Gastrocnemius medialis (tissue), 4 donors: ENCODE measurements at regions of chr11 and their contacts with region 1.

Region 1: GRCh38 chr11:61332797-61333549 is at the starts of genes DDB1 and TKFC:
- DNase-seq: peak; percentile 94
- ATAC-seq: peak; percentile 84 to 86
- H3K4me3 ChIP-seq: peak within 1 kb of the TSS; percentile 89 to 100 (median 98)
- H3K27ac ChIP-seq: peak within 1 kb of the TSS; percentile 93 to 99 (median 97)
- H3K4me1 ChIP-seq: peaks cover 32 to 39% of the 10 kb centered on the region in 2 donors
- H3K27me3 ChIP-seq: no peaks in the 10 kb centered on the region
- CTCF ChIP-seq: peak in 1 of 5 experiments; percentile 5
- POLR2A ChIP-seq: peak; percentile 87 to 91
- total RNA-seq, gene DDB1: 175 to 215 (median 189) TPM
- total RNA-seq, gene TKFC: 6.7 to 14.8 (median 11.8) TPM

Region 2: GRCh38 chr11:61361686-61362541 is 28.9 kb after region 1 on chr11 and contains the starts of genes CYB561A3 and TMEM138:
- in situ Hi-C with region 1: no loop called
- intact Hi-C with region 1: loop called (anchors 1 kb)
- DNase-seq: peak; percentile 87 to 91
- ATAC-seq: peak; percentile 86
- H3K4me3 ChIP-seq: peak within 1 kb of the TSS; percentile 88 to 99 (median 94)
- H3K27ac ChIP-seq: peak within 1 kb of the TSS; percentile 98 to 100 (median 100)
- H3K4me1 ChIP-seq: peaks cover 24 to 29% of the 10 kb centered on the region in 2 donors
- H3K27me3 ChIP-seq: no peaks in the 10 kb centered on the region
- CTCF ChIP-seq: no peak
- POLR2A ChIP-seq: peak; percentile 94 to 98
- total RNA-seq, gene CYB561A3: 23.7 to 56.6 (median 26.4) TPM
- total RNA-seq, gene TMEM138: 9.4 to 18.4 (median 13.9) TPM

Region 3: GRCh38 chr11:61384271-61385242 is 51.6 kb after region 1 on chr11:
- in situ Hi-C with region 1: loop called (anchors 5 kb)
- intact Hi-C with region 1: loop called (anchors 1 kb)
- DNase-seq: no peak
- ATAC-seq: peak in 1 of 2 donors; percentile 17
- H3K4me3 ChIP-seq: no peak overlapping the region
- H3K27ac ChIP-seq: no peak overlapping the region
- H3K4me1 ChIP-seq: peaks cover under 1 to 6% of the 10 kb centered on the region in 2 donors
- H3K27me3 ChIP-seq: no peaks in the 10 kb centered on the region
- CTCF ChIP-seq: no peak
- POLR2A ChIP-seq: no peak

Region 4: DNA sequence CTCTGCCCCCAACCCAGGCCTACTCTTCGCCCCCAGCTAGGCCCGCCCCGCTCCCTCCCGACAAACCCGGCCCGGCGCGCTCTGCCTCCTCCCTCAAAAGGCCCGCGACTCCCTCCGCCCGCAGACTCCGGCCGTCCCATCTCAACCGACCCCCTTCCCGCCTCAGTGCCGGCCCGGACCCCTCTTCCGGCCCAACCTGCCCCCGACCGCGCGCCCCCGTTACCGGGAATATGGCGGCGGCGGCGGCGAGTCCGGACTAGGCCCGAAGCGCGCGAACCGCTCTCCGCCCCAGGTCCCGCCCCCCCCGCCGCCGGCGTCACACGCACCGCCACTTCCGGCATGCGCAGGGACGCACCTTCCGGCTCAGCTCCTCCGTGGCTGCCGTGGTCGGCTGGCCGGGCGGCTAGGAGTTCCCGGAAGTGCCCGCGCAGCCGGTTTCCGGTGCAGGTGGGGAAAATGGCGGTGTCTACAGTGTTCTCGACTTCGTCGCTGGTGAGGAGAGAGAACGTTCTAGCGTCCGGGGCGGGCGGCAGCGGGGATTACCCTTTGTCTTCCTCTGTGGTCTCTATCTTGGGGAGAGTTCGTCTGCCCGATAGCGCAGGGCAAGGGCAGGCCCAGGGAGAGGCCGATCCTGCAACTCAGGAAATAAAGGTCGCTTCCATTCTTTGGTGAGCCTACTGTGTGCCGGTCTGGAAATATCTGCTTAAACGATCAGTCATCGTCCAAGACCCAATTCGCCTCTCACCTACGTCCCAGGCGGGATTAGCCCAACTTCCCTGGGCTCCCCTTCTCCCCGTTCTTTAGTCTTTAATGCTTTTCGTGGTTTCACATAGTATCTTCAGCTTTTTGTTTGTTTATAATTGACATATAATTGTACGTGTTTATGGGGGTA is 97.0 kb after region 1 on chr11 and contains the starts of genes CPSF7 and SDHAF2:
- in situ Hi-C with region 1: no loop called
- intact Hi-C with region 1: loop called (anchors 1 kb)
- DNase-seq: peak; percentile 94 to 95
- ATAC-seq: peak; percentile 94 to 98
- H3K4me3 ChIP-seq: peak within 1 kb of the TSS; percentile 73 to 89 (median 76)
- H3K27ac ChIP-seq: peak within 1 kb of the TSS; percentile 90 to 98 (median 94)
- H3K4me1 ChIP-seq: peaks cover 19 to 30% of the 10 kb centered on the region in 2 donors
- H3K27me3 ChIP-seq: no peaks in the 10 kb centered on the region
- CTCF ChIP-seq: peak in 1 of 5 experiments; percentile 13
- POLR2A ChIP-seq: peak; percentile 82 to 87
- total RNA-seq, gene CPSF7: 38.9 to 180 (median 42.5) TPM
- total RNA-seq, gene SDHAF2: 32.1 to 84.4 (median 53.8) TPM

Region 5: DNA sequence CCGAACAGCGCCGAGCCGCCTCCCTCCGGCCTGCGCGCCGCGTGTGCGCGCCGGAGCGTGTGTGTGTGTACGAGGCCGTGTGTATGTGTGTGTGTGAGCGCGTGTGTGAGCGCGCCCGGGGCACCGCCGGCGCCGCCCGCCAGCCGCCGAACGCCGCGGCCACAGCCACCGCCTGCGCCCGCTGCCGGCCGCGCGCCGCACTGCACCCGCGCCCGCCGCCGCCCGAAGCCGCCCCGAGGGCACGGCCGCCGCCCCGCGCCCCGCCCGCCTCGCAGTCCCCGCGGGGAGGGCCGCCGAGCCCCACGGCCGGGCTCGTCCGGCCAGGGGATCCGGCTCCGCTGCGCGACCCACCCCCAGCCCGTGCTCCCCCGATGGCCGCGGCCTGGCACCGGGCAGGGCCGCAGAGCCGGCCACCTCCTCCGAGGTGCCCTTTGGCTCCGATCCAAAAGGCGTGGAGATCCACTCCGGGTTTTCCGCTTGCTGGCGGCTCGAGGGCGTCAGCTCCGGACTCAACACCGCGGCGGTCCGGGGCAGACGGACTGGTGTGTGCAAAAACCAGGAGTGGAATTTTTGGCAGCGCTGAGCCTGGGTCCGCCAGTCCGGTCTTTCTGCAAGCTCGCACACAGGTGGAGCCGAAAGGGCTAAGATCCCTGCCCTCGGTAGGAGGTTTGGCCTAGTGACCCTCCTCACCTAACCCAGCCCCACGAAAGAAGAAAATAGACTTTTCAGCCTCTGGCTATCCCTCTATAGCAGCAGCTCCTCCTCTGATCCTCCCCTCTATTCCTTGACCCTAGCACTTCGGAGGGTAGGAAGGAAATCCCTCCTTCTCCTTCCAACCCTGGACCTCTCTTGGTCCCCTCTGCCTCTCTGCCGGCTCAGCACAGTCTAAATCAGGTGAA is 248.3 kb after region 1 on chr11 and contains the start of gene SYT7:
- in situ Hi-C with region 1: no loop called
- intact Hi-C with region 1: loop called (anchors 2 kb)
- DNase-seq: peak; percentile 91 to 92
- ATAC-seq: peak; percentile 89 to 91
- H3K4me3 ChIP-seq: peak within 1 kb of the TSS; percentile 44 to 60 (median 56)
- H3K27ac ChIP-seq: peak within 1 kb of the TSS; percentile 64 to 77 (median 72)
- H3K4me1 ChIP-seq: peaks cover 4 to 5% of the 10 kb centered on the region in 2 donors
- H3K27me3 ChIP-seq: peaks cover 0 to 2% (median 0%) of the 10 kb centered on the region in 3 donors
- CTCF ChIP-seq: peak in 4 of 5 experiments; percentile 17 to 79 (median 62)
- POLR2A ChIP-seq: no peak
- total RNA-seq, gene SYT7: 0.68 to 4.9 (median 1.4) TPM